ENCODE measurements at regions of chr3 and their contacts with region 1.

Region 1: DNA sequence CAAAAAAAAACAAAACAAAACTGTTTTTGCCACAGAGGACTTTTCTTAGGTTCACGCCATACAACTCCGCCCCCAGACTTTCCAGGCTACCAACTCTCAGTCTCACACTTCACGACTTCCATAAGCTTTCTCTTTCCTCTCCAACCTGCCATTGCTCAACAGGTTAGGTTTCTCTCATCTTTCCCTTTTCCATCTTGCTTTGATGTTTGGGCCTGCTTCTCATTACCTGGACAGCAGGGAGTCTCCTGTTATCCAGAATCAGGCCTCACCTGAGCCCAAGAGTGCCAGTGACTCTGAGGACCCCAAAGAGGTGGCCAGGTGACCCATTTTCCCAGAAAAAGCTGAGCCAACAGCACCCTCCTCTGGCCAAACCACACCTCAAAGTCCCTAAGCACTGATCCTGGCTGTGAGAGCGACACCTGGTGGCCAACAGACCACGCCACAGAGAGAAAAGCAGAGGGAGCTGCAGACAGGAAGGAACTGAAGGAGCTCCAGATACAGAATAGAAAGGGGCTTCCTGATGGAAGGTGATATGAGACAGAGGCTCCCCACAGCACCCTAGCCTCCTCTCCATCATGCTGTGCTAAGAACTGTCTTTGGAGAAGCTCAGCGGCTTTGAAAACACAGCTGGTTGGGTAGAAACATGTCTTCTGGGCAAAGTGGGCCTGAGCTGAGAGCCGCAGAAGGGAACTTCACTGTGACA is 4.0 kb downstream of the CCDC51 start:
- H3K4me3 Mint-ChIP-seq: no peak overlapping the region
- H3K27ac Mint-ChIP-seq: no peak overlapping the region
- H3K4me1 Mint-ChIP-seq: peaks cover 16% of the 10 kb centered on the region
- H3K27me3 Mint-ChIP-seq: peaks cover 1% of the 10 kb centered on the region

Region 2: GRCh38 chr3:48194446-48195071 is 241.4 kb before region 1 on chr3:
- intact Hi-C with region 1: loop called (anchors 2 kb)
- H3K4me3 Mint-ChIP-seq: no peak overlapping the region
- H3K27ac Mint-ChIP-seq: no peak overlapping the region
- H3K4me1 Mint-ChIP-seq: peaks cover 19% of the 10 kb centered on the region
- H3K27me3 Mint-ChIP-seq: peaks cover 4% of the 10 kb centered on the region

Region 3: GRCh38 chr3:48232734-48233133 is 203.2 kb before region 1 on chr3:
- intact Hi-C with region 1: loop called (anchors 2 kb)
- H3K4me3 Mint-ChIP-seq: peak overlapping the region; percentile 35
- H3K27ac Mint-ChIP-seq: peak overlapping the region; percentile 71
- H3K4me1 Mint-ChIP-seq: peaks cover 44% of the 10 kb centered on the region
- H3K27me3 Mint-ChIP-seq: no peaks in the 10 kb centered on the region

Region 4: GRCh38 chr3:48273594-48274211 is 162.2 kb before region 1 on chr3:
- intact Hi-C with region 1: loop called (anchors 1 kb)
- H3K4me3 Mint-ChIP-seq: no peak overlapping the region
- H3K27ac Mint-ChIP-seq: no peak overlapping the region
- H3K4me1 Mint-ChIP-seq: peaks cover 10% of the 10 kb centered on the region
- H3K27me3 Mint-ChIP-seq: no peaks in the 10 kb centered on the region

Region 5: DNA sequence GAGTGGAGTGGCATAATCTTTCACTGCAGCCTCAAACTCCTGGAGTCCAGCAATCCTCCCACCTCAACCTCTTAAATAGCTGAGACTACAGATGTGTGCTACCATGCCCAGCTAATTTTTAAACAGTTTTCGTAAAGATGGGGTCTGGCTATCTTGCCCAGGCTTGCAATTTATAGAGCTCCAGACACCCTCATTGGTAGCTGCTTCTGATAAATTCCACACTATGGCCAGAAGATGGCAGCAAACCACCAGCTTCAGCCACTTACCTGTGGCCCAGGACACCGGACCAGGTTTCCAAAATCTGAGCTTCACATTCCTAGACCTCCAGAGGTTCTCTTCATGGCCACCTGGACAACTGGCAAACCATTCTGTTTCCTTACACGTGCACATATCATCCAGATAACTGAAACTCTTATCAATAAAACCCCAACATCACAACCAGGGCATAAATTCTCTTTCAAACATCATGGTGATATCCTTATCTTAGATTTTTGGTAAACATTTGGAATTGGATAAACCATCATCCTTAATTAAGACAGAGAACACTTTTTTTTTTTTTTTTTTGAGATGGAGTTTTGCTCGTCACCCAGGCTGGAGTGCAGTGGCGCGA is 35.0 kb before region 1 on chr3:
- intact Hi-C with region 1: loop called (anchors 1 kb)
- H3K4me3 Mint-ChIP-seq: no peak overlapping the region
- H3K27ac Mint-ChIP-seq: no peak overlapping the region
- H3K4me1 Mint-ChIP-seq: peaks cover 11% of the 10 kb centered on the region
- H3K27me3 Mint-ChIP-seq: no peaks in the 10 kb centered on the region

Measured in dendritic cell treated with granulocyte-macrophage colony-stimulating factor and Interleukin-4, amounts not matched to agents 40 ng/mL and 50 ng/mL, for 4 days (primary cell).